H1 (cell line): ENCODE measurements at regions of chr10 and their contacts with region 1.

Region 1: DNA sequence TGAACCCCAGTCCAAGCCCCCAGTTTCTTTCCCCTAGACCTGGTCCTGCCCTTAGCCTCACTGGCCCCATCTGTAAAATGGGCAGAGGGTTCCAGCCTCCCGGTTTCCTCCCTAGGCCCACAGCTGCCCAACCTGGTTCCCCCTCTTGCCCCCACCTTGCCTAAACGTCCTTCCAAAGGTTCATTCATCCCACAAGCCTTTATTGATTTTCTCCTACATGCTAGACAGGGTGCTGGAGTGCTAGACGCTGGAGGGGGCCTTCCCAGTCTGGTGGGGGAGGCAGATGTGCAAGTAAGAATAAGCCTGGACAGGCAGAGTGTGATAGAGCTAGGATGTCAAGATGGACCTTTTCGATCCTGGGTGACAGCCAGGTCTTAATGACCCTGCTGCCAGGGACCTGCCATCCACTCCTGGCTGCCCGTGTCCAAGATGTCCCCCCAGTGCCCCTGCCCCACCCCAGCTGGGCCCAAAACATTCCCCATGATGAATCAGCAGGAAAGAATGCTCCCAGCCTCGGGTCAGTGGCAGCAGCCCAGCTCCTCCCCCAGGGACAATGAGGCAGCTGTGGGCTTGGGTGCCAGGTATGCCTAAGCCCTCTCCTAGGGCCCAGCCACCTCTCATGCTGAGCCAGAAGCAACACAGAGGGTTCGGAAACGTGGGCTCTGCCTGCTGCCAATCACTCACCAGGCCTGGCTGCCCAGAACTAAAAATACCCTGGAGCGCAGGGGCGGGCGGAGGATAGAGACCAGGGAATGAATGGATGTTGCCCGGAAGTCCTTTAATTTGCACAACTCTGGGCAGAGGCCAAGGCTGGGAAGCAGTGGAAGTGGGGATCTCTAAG is 1.3 kb upstream of the LOXL4 start:
- DNase-seq: peak in 1 of 2 experiments; percentile 17
- H3K4me3 ChIP-seq: no peak overlapping the region; a peak in 1 of 8 replicates
- H3K27ac ChIP-seq: no peak overlapping the region
- H3K4me1 ChIP-seq: peaks cover 0 to 16% (median 9%) of the 10 kb centered on the region in 4 experiments; a peak in 6 of 7 replicates
- H3K27me3 ChIP-seq: peaks cover 0 to 12% (median 5%) of the 10 kb centered on the region in 4 experiments; a peak in 4 of 7 replicates
- CTCF ChIP-seq: no peak
- EP300 ChIP-seq: no peak
- POLR2A ChIP-seq: no peak
- RAD21 ChIP-seq: no peak

Region 2: GRCh38 chr10:98295907-98296306 is 26.6 kb after region 1 on chr10:
- CTCF ChIA-PET with region 1: interaction called, 10 read pairs
- POLR2A ChIA-PET with region 1: no interaction called
- DNase-seq: no peak
- H3K4me3 ChIP-seq: no peak overlapping the region
- H3K27ac ChIP-seq: no peak overlapping the region
- H3K4me1 ChIP-seq: peaks cover 0 to 12% (median 3%) of the 10 kb centered on the region in 4 experiments; a peak in 5 of 7 replicates
- H3K27me3 ChIP-seq: no peaks in the 10 kb centered on the region
- CTCF ChIP-seq: no peak
- EP300 ChIP-seq: no peak
- POLR2A ChIP-seq: no peak
- RAD21 ChIP-seq: no peak

Region 3: DNA sequence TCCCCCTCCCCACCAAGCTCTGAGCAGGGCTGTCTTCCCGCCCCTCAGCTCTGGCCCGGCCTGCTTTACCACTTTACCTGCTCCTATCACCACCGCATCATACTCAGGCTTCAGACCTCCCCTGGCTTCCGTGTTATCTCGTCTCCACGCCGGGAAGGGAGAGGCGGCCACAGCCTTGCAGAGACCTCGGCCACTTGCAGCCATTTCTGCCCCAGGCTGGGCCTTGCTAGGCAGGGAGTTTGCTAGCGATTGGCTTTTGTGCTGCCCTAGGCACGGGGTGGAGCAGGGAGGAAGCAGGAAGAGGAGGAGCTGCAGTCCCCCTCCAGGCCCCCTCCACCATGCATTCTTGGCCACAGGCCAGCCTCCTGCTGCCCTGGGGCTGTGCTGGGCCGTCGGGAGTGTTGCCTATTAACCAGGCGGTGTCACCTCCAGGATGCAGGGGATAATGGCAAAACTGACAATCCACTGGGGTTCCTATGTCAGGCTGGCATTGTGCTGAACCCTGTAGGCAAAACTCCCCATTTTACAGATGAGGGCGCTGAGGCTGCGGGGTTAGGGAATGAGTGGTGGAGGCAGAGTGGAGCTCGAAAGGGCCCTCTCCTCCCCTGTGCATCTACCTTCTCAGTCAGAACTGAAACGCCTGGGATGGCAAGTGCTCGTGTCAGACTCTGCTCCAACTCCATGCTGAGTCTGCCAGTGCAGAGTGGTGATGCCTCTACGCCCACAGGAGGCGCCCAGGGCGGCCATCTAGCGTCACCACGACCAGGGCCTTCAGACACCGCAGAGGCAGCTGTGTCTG is 145.8 kb after region 1 on chr10 and contains the start of gene PYROXD2:
- CTCF ChIA-PET with region 1: no interaction called
- POLR2A ChIA-PET with region 1: no interaction called
- DNase-seq: peak; percentile 73 to 81
- H3K4me3 ChIP-seq: peak within 1 kb of the TSS; percentile 14 to 59 (median 32)
- H3K27ac ChIP-seq: peak within 1 kb of the TSS; percentile 74
- H3K4me1 ChIP-seq: peaks cover 0 to 10% (median 3%) of the 10 kb centered on the region in 4 experiments; a peak in 6 of 7 replicates
- H3K27me3 ChIP-seq: no peaks in the 10 kb centered on the region
- CTCF ChIP-seq: no peak
- EP300 ChIP-seq: no peak
- POLR2A ChIP-seq: peak; percentile 77 to 87
- RAD21 ChIP-seq: 0 out of 4 replicates have a peak, but pooled peaks of 1 of the 2 experiments have one; percentile 9
- total RNA-seq, gene PYROXD2: 3.2 and 4.2 TPM in 2 replicates